ENCODE measurements at regions of chr1 and their contacts with region 1.

Region 1: DNA sequence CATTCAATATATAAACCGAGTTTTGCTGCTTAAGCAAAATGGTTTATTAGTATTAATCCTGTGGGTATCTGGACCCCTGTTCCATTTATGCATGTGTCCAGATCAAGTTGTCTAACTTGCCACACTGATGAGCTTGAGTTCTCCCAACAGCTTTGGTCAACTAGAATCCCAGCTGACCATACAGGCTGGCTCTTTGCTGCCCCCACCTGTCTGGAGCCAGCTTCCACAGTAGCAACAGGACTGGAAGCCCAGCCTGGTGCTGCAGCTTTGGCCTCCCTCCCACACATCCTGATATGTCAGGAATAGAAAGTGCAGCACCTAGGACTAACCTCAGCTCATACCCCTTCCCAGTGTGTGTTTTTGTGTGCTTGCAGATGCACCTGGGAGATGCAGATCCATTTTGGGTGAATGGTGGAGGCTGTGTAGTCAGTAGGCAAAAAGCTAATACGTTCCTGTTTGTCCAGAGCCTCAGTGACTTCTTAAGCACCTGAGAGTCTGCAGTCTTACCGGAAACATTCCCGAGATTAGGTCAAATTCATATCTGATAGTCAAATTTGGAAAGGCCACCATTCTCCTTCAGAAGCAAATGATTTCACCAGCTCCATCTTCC is 40.9 kb upstream of the BEND5 start:
- DNase-seq: no peak

Region 2: DNA sequence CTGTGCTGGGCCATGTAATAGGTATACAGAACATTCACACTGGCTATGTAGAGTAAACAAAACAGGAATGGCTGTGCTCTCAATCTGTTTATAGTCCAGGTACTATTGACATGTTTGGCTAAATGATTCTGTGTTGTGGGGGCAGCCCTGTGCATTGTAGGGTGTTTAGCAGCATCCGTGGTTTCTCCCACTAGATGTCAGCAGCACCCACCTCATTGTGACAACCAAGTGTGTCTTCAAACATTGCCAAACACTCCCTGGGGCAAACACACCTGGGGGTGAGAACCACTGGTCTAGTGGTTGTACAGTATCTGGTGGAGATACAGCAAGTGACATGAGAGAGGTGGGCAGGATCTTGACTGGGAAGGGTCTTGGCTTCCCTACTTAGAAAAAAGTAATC is 265.2 kb before region 1 on chr1:
- intact Hi-C with region 1: loop called (anchors 5 kb)
- DNase-seq: no peak

Region 3: GRCh38 chr1:48572646-48573261 is 244.9 kb before region 1 on chr1:
- intact Hi-C with region 1: loop called (anchors 5 kb)
- DNase-seq: no peak

Region 4: DNA sequence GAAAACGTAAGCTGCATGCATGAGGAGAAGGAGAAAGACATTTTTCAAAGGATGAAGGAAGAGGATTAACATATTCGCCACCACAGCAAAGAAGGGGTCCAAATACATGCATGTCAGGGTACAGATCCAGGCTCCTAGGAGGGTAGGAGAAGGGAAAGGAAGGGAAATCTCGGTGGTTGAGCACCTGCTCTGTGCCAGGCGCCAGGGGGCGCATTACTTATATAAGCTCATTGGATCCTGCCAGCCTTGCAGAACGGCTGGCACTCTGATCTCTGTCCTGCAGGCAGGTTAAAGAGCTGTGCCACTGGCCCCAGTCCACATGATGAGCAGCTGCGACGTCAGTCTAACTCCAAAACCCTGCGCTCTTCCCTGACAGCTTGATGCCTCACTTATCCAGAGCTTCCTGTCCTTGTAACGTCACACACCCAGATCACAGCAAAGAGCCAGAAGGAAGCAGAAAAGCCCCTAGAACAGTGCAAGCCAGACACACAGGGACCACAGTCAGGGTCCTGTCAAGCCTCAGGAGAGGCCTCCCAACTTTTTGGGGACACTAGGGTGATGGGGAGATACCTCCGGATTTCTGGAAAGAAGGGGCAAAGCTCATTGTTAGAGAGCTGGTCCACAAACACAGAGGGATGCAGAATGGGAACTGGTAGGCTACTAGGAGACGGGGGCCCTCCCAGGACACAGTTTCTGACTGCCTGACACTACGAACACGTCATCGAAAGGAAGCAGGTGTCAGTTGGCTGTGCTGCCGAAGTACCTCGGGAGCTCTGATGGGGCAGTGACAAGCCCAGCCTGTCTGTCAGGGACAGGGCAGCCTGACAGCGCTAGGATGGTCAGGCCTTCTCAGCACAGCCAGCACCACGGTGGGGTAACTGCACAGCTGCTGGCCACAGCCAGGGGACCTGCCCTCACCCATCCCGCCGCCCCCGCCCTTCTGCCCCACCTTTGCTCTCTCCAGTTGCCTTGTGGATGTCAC is 140.0 kb before region 1 on chr1:
- intact Hi-C with region 1: loop called (anchors 5 kb)
- DNase-seq: no peak